Activated naive CD4-positive, alpha-beta T cell treated with anti-CD3 and anti-CD28 coated beads for 36 hours (primary cell): ENCODE measurements at regions of chr19 and their contacts with region 1.

Region 1: DNA sequence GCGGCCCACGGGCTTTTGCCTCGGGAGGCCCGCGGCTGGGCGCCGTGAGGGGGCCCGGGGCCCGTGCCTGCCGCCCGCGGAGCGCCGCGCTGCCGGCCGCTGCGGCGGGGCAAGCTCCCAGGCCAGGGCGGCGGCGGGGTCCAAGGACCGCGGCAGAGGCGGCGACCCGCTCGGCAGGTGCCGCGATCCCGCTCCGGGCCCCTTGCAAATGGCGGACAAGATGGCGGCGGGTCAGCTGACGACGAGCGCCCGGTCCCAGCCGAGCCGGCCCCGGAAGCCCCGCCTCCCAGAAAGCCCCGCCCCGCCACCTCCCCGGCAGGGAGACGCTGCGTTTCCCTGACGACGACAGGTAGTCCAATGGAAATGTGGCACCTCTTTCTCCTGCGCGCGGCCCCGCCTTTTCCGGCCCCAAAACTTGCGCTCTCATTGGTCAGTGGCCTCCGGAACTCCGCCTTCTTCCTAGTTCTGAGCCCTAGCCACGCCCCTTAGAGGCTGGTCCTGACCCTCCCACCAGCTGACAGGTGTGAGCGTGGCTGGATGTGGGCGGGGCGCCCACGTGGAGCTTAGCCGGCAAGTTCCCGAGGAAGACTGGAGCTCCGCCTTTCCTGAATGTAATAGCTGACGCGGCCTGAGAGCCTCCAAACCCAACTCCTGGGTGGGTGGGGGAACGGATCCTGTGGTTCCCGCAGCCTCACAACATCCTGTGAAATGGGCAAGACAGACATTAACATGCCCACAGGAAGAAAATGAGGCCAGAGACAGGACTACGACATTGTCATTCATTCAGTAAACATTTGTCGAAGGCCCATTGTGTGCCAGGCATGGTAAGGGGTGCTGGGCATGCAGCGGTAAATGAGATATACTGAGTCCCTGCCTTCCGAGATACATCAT is at the start of gene AP3D1:
- DNase-seq: peak; percentile 100
- H3K4me3 Mint-ChIP-seq: peak within 1 kb of the TSS; percentile 83
- H3K27ac Mint-ChIP-seq: peak within 1 kb of the TSS; percentile 74
- H3K4me1 Mint-ChIP-seq: peaks cover 39% of the 10 kb centered on the region
- H3K27me3 Mint-ChIP-seq: no peaks in the 10 kb centered on the region
- total RNA-seq, gene AP3D1: 60.5 to 64.2 TPM

Region 2: GRCh38 chr19:1774999-1775772 is 376.4 kb before region 1 on chr19:
- CTCF ChIA-PET with region 1: no interaction called
- intact Hi-C with region 1: no loop called
- DNase-seq: no peak
- H3K4me3 Mint-ChIP-seq: no peak overlapping the region
- H3K27ac Mint-ChIP-seq: no peak overlapping the region
- H3K4me1 Mint-ChIP-seq: no peaks in the 10 kb centered on the region
- H3K27me3 Mint-ChIP-seq: peaks cover 69% of the 10 kb centered on the region

Region 3: GRCh38 chr19:1855040-1855827 is 296.4 kb before region 1 on chr19:
- CTCF ChIA-PET with region 1: no interaction called
- intact Hi-C with region 1: loop called (anchors 5 kb)
- DNase-seq: peak; percentile 94
- H3K4me3 Mint-ChIP-seq: peak overlapping the region; percentile 70
- H3K27ac Mint-ChIP-seq: peak overlapping the region; percentile 87
- H3K4me1 Mint-ChIP-seq: peaks cover 62% of the 10 kb centered on the region
- H3K27me3 Mint-ChIP-seq: no peaks in the 10 kb centered on the region

Region 4: GRCh38 chr19:2061495-2062381 is 89.8 kb before region 1 on chr19:
- CTCF ChIA-PET with region 1: no interaction called
- intact Hi-C with region 1: loop called (anchors 1 kb)
- DNase-seq: peak; percentile 99
- H3K4me3 Mint-ChIP-seq: peak overlapping the region; percentile 87
- H3K27ac Mint-ChIP-seq: peak overlapping the region; percentile 86
- H3K4me1 Mint-ChIP-seq: peaks cover 36% of the 10 kb centered on the region
- H3K27me3 Mint-ChIP-seq: no peaks in the 10 kb centered on the region

Region 5: DNA sequence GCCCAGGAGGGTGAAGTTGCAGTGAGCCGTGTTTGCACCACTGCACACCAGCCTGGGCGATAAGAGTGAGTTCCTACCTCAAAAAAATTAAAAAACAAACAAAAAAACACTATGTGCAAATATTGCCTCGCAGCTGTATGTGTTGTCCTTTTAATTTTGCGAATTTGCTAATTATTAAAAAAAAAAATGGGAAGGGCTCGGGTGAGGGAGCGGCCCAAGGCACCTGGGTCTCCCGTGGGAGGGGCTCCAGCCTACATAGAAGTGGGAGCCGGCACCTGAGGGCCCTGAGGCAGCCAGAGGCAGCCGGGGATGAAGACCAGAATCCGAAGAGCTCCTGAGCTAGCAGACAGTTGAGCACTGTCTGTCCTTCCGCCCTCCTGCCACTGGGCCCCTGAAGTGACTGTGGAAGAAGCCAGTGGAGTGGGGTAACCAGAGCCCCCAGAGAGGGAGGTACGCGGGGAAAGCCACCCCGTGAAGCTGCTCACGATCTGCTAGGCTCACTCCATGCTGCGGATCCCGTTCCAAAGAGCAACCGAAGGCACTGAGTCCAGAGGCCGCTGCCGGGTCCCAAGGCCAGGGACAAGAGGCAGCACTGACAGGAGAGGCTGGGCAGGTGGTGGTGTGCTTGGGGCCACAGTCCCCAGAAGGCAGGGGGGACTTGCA is 48.4 kb before region 1 on chr19:
- CTCF ChIA-PET with region 1: no interaction called
- intact Hi-C with region 1: no loop called
- DNase-seq: no peak
- H3K4me3 Mint-ChIP-seq: no peak overlapping the region
- H3K27ac Mint-ChIP-seq: no peak overlapping the region
- H3K4me1 Mint-ChIP-seq: no peaks in the 10 kb centered on the region
- H3K27me3 Mint-ChIP-seq: no peaks in the 10 kb centered on the region

Region 6: DNA sequence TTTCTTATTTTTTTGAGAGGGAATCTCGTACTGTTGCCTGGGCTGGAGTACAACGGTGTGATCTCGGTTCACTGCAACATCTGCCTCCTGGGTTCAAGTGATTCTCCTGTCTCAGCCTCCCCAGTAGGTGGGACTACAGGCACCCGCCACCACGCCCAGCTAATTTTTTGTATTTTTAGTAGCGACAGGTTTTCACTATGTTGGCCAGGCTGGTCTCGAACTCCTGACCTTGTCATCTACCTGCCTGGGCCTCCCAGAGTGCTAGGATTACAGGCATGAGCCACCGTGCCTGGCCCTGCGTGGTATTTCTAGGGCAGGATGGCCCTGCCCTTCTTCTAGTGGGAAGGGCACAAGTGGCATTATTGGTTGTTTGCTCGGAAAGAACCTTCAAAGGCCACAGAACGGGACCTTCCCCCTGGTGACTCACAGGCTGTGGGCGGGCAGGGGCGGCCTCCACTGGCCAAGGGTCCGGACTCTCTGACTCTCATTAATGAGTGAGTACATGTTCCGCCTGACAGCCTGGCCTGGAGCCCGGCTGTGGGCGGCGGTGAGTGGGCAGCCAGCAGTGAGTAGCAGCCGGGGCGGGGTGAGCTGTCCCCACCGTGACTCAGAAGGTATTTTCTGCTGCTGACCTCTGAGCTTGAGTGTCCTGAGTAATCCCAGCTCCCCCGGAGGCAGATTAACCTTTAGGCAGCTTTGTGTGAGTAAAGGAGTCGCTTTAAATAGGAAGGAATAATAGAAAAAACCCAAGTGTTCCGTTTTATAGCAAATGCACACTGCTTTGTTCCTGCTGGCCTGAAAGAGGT is 17.2 kb after region 1 on chr19:
- CTCF ChIA-PET with region 1: interaction called, 5 read pairs
- intact Hi-C with region 1: loop called (anchors 2 kb)
- DNase-seq: peak; percentile 71
- H3K4me3 Mint-ChIP-seq: peak overlapping the region; percentile 12
- H3K27ac Mint-ChIP-seq: peak overlapping the region; percentile 72
- H3K4me1 Mint-ChIP-seq: peaks cover 57% of the 10 kb centered on the region
- H3K27me3 Mint-ChIP-seq: no peaks in the 10 kb centered on the region

Region 7: DNA sequence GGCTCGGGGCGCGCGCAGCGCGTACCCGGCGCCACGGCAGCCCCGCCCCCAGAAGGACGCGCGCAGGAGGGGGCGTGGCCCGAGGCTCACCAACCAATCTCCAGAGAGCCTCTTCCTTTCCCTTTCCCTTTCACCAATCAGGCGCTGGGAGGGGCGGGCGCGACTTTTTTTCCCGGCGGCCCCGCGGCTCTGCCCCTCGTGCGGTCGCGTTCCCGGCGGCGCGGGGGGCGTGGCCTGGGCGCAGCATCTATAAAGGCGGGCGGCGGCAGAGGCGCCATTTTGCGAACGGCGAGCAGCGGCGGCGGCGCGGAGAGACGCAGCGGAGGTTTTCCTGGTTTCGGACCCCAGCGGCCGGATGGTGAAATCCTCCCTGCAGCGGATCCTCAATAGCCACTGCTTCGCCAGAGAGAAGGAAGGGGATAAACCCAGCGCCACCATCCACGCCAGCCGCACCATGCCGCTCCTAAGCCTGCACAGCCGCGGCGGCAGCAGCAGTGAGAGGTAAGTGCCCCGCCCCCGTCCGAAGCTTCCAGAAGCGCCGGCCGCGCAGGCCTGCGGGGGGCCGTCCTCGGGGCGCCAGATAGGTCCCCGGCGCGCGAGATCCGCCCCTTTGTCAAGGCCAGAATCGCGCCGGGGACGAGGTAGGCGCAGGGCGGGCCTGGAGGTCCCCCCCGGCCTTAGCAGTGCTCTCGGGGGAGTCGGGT is 117.8 kb after region 1 on chr19:
- CTCF ChIA-PET with region 1: interaction called, 3 read pairs
- intact Hi-C with region 1: loop called (anchors 1 kb)
- DNase-seq: peak; percentile 99
- H3K4me3 Mint-ChIP-seq: peak overlapping the region; percentile 89
- H3K27ac Mint-ChIP-seq: peak overlapping the region; percentile 92
- H3K4me1 Mint-ChIP-seq: peaks cover 43% of the 10 kb centered on the region
- H3K27me3 Mint-ChIP-seq: no peaks in the 10 kb centered on the region

Region 8: GRCh38 chr19:2391118-2391725 is 239.6 kb after region 1 on chr19:
- CTCF ChIA-PET with region 1: interaction called, 3 read pairs
- intact Hi-C with region 1: loop called (anchors 1 kb)
- DNase-seq: peak; percentile 56
- H3K4me3 Mint-ChIP-seq: no peak overlapping the region
- H3K27ac Mint-ChIP-seq: no peak overlapping the region
- H3K4me1 Mint-ChIP-seq: peaks cover 15% of the 10 kb centered on the region
- H3K27me3 Mint-ChIP-seq: no peaks in the 10 kb centered on the region